Breast epithelium (tissue), 4 donors: ENCODE measurements at regions of chr12 and their contacts with region 1.

Region 1: GRCh38 chr12:123868791-123869190 is 103.8 kb downstream of the CCDC92 start:
- DNase-seq: no peak
- H3K4me3 ChIP-seq: no peak overlapping the region
- H3K27ac ChIP-seq: no peak overlapping the region
- H3K4me1 ChIP-seq: no peaks in the 10 kb centered on the region
- H3K27me3 ChIP-seq: no peaks in the 10 kb centered on the region
- CTCF ChIP-seq: no peak
- POLR2A ChIP-seq: no peak

Region 2: GRCh38 chr12:123891516-123892179 is 22.9 kb after region 1 on chr12:
- intact Hi-C with region 1: loop called (anchors 2 kb)
- DNase-seq: no peak
- H3K4me3 ChIP-seq: no peak overlapping the region
- H3K27ac ChIP-seq: no peak overlapping the region
- H3K4me1 ChIP-seq: no peaks in the 10 kb centered on the region
- H3K27me3 ChIP-seq: no peaks in the 10 kb centered on the region
- CTCF ChIP-seq: no peak
- POLR2A ChIP-seq: no peak

Region 3: GRCh38 chr12:124007826-124008570 is 139.2 kb after region 1 on chr12:
- intact Hi-C with region 1: no loop called
- DNase-seq: no peak
- H3K4me3 ChIP-seq: no peak overlapping the region
- H3K27ac ChIP-seq: no peak overlapping the region
- H3K4me1 ChIP-seq: no peaks in the 10 kb centered on the region
- H3K27me3 ChIP-seq: no peaks in the 10 kb centered on the region
- CTCF ChIP-seq: no peak
- POLR2A ChIP-seq: no peak